A549 (cell line): ENCODE measurements at regions of chr15 and their contacts with region 1.

Region 1: GRCh38 chr15:89358755-89359439 is 24.3 kb upstream of the POLG start:
- DNase-seq: peak; percentile 86 to 94
- ATAC-seq: peak; percentile 63 to 83
- H3K4me3 ChIP-seq: peak overlapping the region; percentile 35
- H3K27ac ChIP-seq: peak overlapping the region; percentile 31 to 80; a peak in 5 of 6 replicates
- H3K4me1 ChIP-seq: peaks cover 28% of the 10 kb centered on the region
- CTCF ChIP-seq: peak; percentile 100
- EP300 ChIP-seq: no peak
- POLR2A ChIP-seq: no peak
- RAD21 ChIP-seq: peak; percentile 93 to 99

Region 2: GRCh38 chr15:88690331-88690730 is 668.6 kb before region 1 on chr15:
- CTCF ChIA-PET with region 1: no interaction called
- POLR2A ChIA-PET with region 1: no interaction called
- DNase-seq: no peak
- ATAC-seq: peak in 1 of 2 experiments; percentile 46; a peak in 3 of 6 replicates
- H3K4me3 ChIP-seq: no peak overlapping the region
- H3K27ac ChIP-seq: no peak overlapping the region
- H3K4me1 ChIP-seq: no peaks in the 10 kb centered on the region
- CTCF ChIP-seq: no peak
- EP300 ChIP-seq: no peak
- POLR2A ChIP-seq: no peak
- RAD21 ChIP-seq: no peak

Region 3: DNA sequence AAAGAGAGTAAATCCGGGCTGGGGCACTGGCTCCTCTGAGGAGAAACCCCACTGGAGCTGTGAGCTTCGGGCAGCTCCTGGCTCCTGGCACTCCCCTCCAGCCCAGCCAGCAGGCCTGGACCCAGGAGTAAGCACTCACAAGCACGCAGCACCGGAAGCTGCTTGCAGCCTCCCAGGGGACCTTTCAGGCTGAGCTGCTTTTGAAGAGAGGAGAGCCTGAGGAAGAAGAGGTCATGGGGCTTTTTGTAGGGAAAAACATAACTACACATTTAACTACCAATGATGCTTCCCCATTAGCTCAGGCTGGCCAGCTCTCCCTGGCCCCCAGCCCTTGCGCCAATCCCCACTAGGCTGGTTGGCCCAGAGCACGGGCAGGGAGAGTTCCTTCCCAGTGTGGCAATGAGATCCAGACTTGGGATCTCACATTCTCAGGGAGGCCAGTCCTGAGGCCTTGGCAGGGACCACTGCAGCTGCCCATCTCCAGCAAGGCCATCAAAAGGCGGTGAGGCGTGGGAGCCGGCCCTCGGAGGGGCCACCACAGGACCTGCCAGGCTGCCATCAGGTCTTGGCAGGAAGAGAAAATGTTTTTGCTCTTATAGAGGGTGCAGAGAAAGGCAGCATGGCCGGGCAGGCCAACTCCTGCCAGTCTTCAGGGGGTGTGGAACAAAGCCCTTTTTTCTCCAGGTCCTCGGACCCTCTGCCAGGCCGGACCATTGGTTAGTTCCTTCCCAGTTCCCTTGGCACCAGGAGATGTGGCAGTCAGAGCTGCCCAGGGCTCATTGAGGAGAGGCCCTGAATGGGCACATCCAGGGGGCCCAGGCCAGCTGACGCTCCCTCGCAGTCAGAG is 404.2 kb before region 1 on chr15:
- CTCF ChIA-PET with region 1: no interaction called
- POLR2A ChIA-PET with region 1: no interaction called
- DNase-seq: no peak
- ATAC-seq: peak; percentile 24 to 27; a peak in 2 of 6 replicates
- H3K4me3 ChIP-seq: no peak overlapping the region
- H3K27ac ChIP-seq: peak overlapping the region in 1 of 2 experiments; percentile 34; a peak in 2 of 6 replicates
- H3K4me1 ChIP-seq: peaks cover 10% of the 10 kb centered on the region; the same call in 1 of the 3 replicates
- CTCF ChIP-seq: no peak
- EP300 ChIP-seq: no peak
- POLR2A ChIP-seq: no peak
- RAD21 ChIP-seq: no peak

Region 4: DNA sequence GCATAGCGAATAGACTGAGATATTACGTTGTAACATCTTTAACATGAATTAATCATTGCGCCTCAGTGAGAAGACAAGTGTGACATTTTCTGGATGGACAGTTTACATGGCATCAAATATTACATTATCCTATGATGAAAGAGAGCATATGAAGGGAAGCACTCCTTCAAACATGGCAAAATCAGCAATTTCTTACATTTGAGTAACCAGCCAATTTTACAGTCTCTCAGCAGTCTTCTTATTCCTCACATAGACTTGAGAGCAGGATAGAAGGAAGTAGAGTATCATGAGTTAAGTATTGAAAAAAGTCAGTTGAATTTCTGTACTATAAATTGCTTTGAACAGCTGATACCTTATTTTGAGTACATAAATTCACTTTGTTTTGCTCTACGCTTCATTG is 76.3 kb before region 1 on chr15:
- CTCF ChIA-PET with region 1: no interaction called
- POLR2A ChIA-PET with region 1: no interaction called
- DNase-seq: no peak
- ATAC-seq: no peak
- H3K4me3 ChIP-seq: no peak overlapping the region
- H3K27ac ChIP-seq: no peak overlapping the region
- H3K4me1 ChIP-seq: no peaks in the 10 kb centered on the region
- CTCF ChIP-seq: no peak
- EP300 ChIP-seq: no peak
- POLR2A ChIP-seq: no peak
- RAD21 ChIP-seq: no peak

Region 5: GRCh38 chr15:89334510-89335288 is 24.2 kb before region 1 on chr15 and contains the start of gene POLG:
- CTCF ChIA-PET with region 1: interaction called, 593 read pairs
- POLR2A ChIA-PET with region 1: no interaction called
- DNase-seq: peak; percentile 96 to 100
- ATAC-seq: peak; percentile 80 to 94
- H3K4me3 ChIP-seq: peak within 1 kb of the TSS; percentile 68
- H3K27ac ChIP-seq: peak within 1 kb of the TSS; percentile 89 to 95
- H3K4me1 ChIP-seq: peaks cover 37% of the 10 kb centered on the region
- CTCF ChIP-seq: no peak
- EP300 ChIP-seq: no peak
- POLR2A ChIP-seq: peak; percentile 99
- RAD21 ChIP-seq: no peak
- polyA plus RNA-seq, gene POLG: 24.1 and 34.0 TPM in 2 replicates

Region 6: GRCh38 chr15:89416141-89416853 is 57.4 kb after region 1 on chr15:
- CTCF ChIA-PET with region 1: interaction called, 290 read pairs
- POLR2A ChIA-PET with region 1: no interaction called
- DNase-seq: peak; percentile 90 to 94
- ATAC-seq: peak; percentile 74 to 91
- H3K4me3 ChIP-seq: no peak overlapping the region
- H3K27ac ChIP-seq: no peak overlapping the region
- H3K4me1 ChIP-seq: peaks cover under 1% of the 10 kb centered on the region; the same call in 1 of the 3 replicates
- CTCF ChIP-seq: peak; percentile 93
- EP300 ChIP-seq: no peak
- POLR2A ChIP-seq: no peak
- RAD21 ChIP-seq: peak; percentile 59 to 63

Region 7: GRCh38 chr15:89457097-89457496 is 98.2 kb after region 1 on chr15:
- CTCF ChIA-PET with region 1: interaction called, 43 read pairs
- POLR2A ChIA-PET with region 1: no interaction called
- DNase-seq: peak; percentile 77 to 81
- ATAC-seq: peak in 1 of 2 experiments; percentile 83; a peak in 3 of 6 replicates
- H3K4me3 ChIP-seq: no peak overlapping the region
- H3K27ac ChIP-seq: no peak overlapping the region
- H3K4me1 ChIP-seq: peaks cover 16% of the 10 kb centered on the region; the same call in 2 of the 3 replicates
- CTCF ChIP-seq: no peak
- EP300 ChIP-seq: no peak
- POLR2A ChIP-seq: no peak
- RAD21 ChIP-seq: no peak

Region 8: DNA sequence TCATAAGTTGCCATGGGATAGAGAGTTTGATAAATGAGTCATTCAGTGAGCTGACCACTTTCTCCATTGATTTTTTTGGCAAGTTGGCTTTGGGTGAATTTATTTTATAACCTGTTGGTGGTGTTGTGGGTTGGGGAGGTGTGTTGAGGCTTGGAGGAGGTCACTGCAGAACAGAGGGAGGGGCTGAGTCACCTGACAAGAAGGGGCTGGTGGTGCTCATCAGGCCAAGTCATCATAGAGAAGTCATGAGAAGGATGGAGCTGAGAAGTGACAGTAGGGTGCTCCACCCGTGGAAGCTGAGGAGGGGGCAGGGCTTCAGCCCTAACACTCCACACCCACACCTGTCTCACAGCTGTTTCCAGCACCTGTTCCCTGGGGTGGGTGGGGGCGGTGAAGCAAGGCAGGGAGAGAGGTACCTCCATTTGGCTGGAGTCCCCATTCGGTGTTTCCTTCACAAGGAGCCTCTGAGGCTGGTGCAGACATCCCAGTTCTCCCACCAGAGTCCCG is 127.0 kb after region 1 on chr15:
- CTCF ChIA-PET with region 1: interaction called, 51 read pairs
- POLR2A ChIA-PET with region 1: no interaction called
- DNase-seq: no peak
- ATAC-seq: no peak
- H3K4me3 ChIP-seq: no peak overlapping the region
- H3K27ac ChIP-seq: no peak overlapping the region
- H3K4me1 ChIP-seq: peaks cover 7% of the 10 kb centered on the region; the same call in 1 of the 3 replicates
- CTCF ChIP-seq: no peak
- EP300 ChIP-seq: no peak
- POLR2A ChIP-seq: no peak
- RAD21 ChIP-seq: no peak

Region 9: GRCh38 chr15:89556413-89557262 is 197.7 kb after region 1 on chr15:
- CTCF ChIA-PET with region 1: interaction called, 26 read pairs
- POLR2A ChIA-PET with region 1: no interaction called
- DNase-seq: peak; percentile 72 to 89
- ATAC-seq: peak; percentile 79 to 93
- H3K4me3 ChIP-seq: no peak overlapping the region
- H3K27ac ChIP-seq: peak overlapping the region in 1 of 2 experiments; percentile 48; a peak in 1 of 6 replicates
- H3K4me1 ChIP-seq: peaks cover 3% of the 10 kb centered on the region; the same call in 2 of the 3 replicates
- CTCF ChIP-seq: peak; percentile 89
- EP300 ChIP-seq: no peak
- POLR2A ChIP-seq: no peak
- RAD21 ChIP-seq: peak; percentile 86 to 87